Activated naive CD4-positive, alpha-beta T cell treated with anti-CD3 and anti-CD28 coated beads for 36 hours (primary cell): ENCODE measurements at regions of chr15 and their contacts with region 1.

Region 1: GRCh38 chr15:43168192-43169107 is 16.8 kb upstream of the CCNDBP1 start:
- DNase-seq: no peak
- H3K4me3 Mint-ChIP-seq: no peak overlapping the region
- H3K27ac Mint-ChIP-seq: no peak overlapping the region
- H3K4me1 Mint-ChIP-seq: no peaks in the 10 kb centered on the region
- H3K27me3 Mint-ChIP-seq: no peaks in the 10 kb centered on the region

Region 2: GRCh38 chr15:42808913-42809312 is 359.5 kb before region 1 on chr15:
- CTCF ChIA-PET with region 1: no interaction called
- intact Hi-C with region 1: no loop called
- DNase-seq: no peak
- H3K4me3 Mint-ChIP-seq: no peak overlapping the region
- H3K27ac Mint-ChIP-seq: no peak overlapping the region
- H3K4me1 Mint-ChIP-seq: no peaks in the 10 kb centered on the region
- H3K27me3 Mint-ChIP-seq: no peaks in the 10 kb centered on the region

Region 3: GRCh38 chr15:43095243-43095642 is 73.2 kb before region 1 on chr15:
- CTCF ChIA-PET with region 1: no interaction called
- intact Hi-C with region 1: loop called (anchors 5 kb)
- DNase-seq: no peak
- H3K4me3 Mint-ChIP-seq: no peak overlapping the region
- H3K27ac Mint-ChIP-seq: no peak overlapping the region
- H3K4me1 Mint-ChIP-seq: peaks cover 43% of the 10 kb centered on the region
- H3K27me3 Mint-ChIP-seq: no peaks in the 10 kb centered on the region